Endothelial cell of umbilical vein (primary cell): ENCODE measurements at regions of chr3 and their contacts with region 1.

Region 1: GRCh38 chr3:151838583-151839312 is 24.8 kb downstream of the AADAC start:
- DNase-seq: peak; percentile 74
- H3K4me3 ChIP-seq: no peak overlapping the region
- H3K27ac ChIP-seq: no peak overlapping the region
- H3K4me1 ChIP-seq: peaks cover 21% of the 10 kb centered on the region
- H3K27me3 ChIP-seq: no peaks in the 10 kb centered on the region
- CTCF ChIP-seq: peak; percentile 62 to 65
- POLR2A ChIP-seq: no peak

Region 2: GRCh38 chr3:151282921-151283320 is 555.8 kb before region 1 on chr3:
- CTCF ChIA-PET with region 1: interaction called, 4 read pairs
- POLR2A ChIA-PET with region 1: no interaction called
- dilution Hi-C with region 1: no loop called
- intact Hi-C with region 1: loop called (anchors 5 kb)
- DNase-seq: peak; percentile 58
- H3K4me3 ChIP-seq: no peak overlapping the region
- H3K27ac ChIP-seq: no peak overlapping the region
- H3K4me1 ChIP-seq: no peaks in the 10 kb centered on the region
- H3K27me3 ChIP-seq: peaks cover 0 to 6% of the 10 kb centered on the region in 2 experiments
- CTCF ChIP-seq: peak; percentile 30 to 42
- POLR2A ChIP-seq: no peak

Region 3: DNA sequence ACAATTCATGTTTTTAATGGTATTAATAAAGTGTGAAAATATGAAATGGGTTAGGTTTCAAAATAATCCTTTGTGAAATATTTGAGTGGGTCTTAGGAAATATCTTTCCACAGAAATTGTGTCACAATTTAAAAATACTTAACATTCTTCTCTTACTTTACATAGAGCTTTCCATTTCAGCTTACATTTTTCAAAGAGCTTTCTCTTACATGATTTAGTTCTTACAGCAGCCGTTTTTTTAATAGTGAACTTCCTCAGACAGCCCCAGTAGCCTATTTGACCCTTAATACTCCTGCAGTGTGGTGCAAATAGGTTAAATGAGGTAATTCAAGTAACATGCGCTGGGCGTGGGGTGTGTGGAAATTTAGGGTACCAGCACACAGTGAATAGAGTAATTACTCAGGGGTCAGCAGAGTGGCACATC is 476.0 kb before region 1 on chr3:
- CTCF ChIA-PET with region 1: no interaction called
- POLR2A ChIA-PET with region 1: no interaction called
- dilution Hi-C with region 1: no loop called
- intact Hi-C with region 1: no loop called
- DNase-seq: no peak
- H3K4me3 ChIP-seq: no peak overlapping the region
- H3K27ac ChIP-seq: no peak overlapping the region
- H3K4me1 ChIP-seq: no peaks in the 10 kb centered on the region
- H3K27me3 ChIP-seq: no peaks in the 10 kb centered on the region
- CTCF ChIP-seq: no peak
- POLR2A ChIP-seq: no peak

Region 4: GRCh38 chr3:151439652-151440129 is 399.1 kb before region 1 on chr3:
- CTCF ChIA-PET with region 1: interaction called, 145 read pairs
- POLR2A ChIA-PET with region 1: interaction called, 3 read pairs
- dilution Hi-C with region 1: no loop called
- intact Hi-C with region 1: loop called (anchors 1 kb)
- DNase-seq: peak; percentile 65
- H3K4me3 ChIP-seq: no peak overlapping the region
- H3K27ac ChIP-seq: no peak overlapping the region
- H3K4me1 ChIP-seq: no peaks in the 10 kb centered on the region
- H3K27me3 ChIP-seq: no peaks in the 10 kb centered on the region
- CTCF ChIP-seq: peak; percentile 45 to 51
- POLR2A ChIP-seq: no peak

Region 5: DNA sequence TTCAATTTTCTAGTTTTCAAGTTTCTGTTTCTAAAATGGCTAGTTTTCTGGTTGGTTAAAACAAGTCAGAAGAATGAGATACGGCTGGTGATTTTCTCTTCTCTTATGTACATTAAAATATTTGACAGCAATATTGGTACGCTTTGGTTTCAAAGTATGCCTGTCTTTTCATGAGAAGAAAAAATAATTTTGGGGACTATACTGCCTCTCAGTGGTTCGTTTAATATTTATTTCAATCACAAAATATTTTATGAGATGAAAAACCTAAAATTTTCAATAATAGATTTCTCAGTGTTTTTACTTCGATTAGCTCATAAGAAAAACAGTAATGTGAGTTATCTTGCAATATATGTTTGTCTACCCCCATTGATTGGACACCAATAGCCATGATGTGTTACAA is 177.9 kb before region 1 on chr3:
- CTCF ChIA-PET with region 1: no interaction called
- POLR2A ChIA-PET with region 1: no interaction called
- dilution Hi-C with region 1: no loop called
- intact Hi-C with region 1: no loop called
- DNase-seq: no peak
- H3K4me3 ChIP-seq: no peak overlapping the region
- H3K27ac ChIP-seq: no peak overlapping the region
- H3K4me1 ChIP-seq: no peaks in the 10 kb centered on the region
- H3K27me3 ChIP-seq: peaks cover 0 to 3% of the 10 kb centered on the region in 2 experiments
- CTCF ChIP-seq: no peak
- POLR2A ChIP-seq: no peak

Region 6: DNA sequence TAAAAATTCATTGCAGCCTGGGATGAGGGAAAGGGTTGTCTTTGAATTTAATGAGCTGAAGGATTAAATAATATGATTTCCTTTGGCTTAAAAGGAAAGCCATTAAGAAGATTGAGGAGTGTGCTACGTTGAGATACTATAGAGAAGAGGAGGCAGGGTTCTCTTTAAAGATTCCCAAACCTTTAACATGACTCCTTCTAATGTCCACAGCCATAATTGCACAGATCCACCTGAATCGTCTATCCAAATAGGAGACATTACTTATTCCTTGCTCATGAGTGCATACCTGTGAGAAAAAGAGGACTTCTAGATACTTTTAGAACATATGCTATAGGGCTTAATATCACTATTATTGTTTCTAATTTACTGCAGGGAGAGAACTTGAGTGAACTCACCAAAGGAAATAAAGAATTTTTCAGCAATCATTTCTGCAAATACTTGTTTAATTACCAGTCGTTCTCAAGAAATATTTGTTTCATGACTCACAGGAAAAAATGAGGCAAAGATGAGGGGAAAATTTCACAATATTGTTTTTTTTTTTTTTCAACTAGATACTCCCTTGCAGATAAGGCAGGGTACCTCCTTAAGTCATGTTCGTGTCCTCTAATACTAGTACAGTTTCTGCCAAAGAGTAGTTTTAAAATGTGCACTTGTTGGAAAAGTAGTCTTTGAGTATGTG is 25.8 kb after region 1 on chr3:
- CTCF ChIA-PET with region 1: interaction called, 7 read pairs
- POLR2A ChIA-PET with region 1: no interaction called
- dilution Hi-C with region 1: no loop called
- intact Hi-C with region 1: loop called (anchors 2 kb)
- DNase-seq: peak; percentile 84
- H3K4me3 ChIP-seq: peak overlapping the region in 1 of 3 experiments; percentile 17
- H3K27ac ChIP-seq: peak overlapping the region; percentile 66
- H3K4me1 ChIP-seq: peaks cover 31% of the 10 kb centered on the region
- H3K27me3 ChIP-seq: no peaks in the 10 kb centered on the region
- CTCF ChIP-seq: no peak
- POLR2A ChIP-seq: no peak

Region 7: GRCh38 chr3:151976211-151977050 is 137.7 kb after region 1 on chr3:
- CTCF ChIA-PET with region 1: no interaction called
- POLR2A ChIA-PET with region 1: no interaction called
- dilution Hi-C with region 1: no loop called
- intact Hi-C with region 1: loop called (anchors 2 kb)
- DNase-seq: peak; percentile 99
- H3K4me3 ChIP-seq: peak overlapping the region in 1 of 3 experiments; percentile 3
- H3K27ac ChIP-seq: peak overlapping the region; percentile 90
- H3K4me1 ChIP-seq: peaks cover 32% of the 10 kb centered on the region
- H3K27me3 ChIP-seq: no peaks in the 10 kb centered on the region
- CTCF ChIP-seq: no peak
- POLR2A ChIP-seq: no peak